Activated CD8-positive, alpha-beta T cell treated with anti-CD3 and anti-CD28 coated beads for 36 hours (primary cell): ENCODE measurements at regions of chr14 and their contacts with region 1.

Region 1: DNA sequence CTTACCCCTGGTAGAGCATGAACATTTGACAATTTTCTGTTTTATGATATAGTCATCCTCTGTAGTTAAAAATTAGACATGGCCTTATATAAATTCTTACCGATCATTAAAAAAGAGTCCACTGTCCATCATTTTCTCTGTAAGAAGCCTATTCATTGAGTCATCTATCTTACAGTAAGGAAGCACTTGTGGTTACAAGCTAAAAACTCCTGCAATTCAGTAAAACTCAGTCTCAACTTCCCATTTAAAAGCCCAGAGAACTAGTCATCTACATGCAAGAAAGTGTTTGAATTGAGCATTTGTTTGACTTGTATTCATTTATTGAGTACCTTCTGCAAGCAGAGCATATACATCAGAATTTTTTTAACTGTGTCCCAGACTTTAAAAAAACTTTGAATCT is 63.3 kb downstream of the GTF2A1 start:
- DNase-seq: no peak
- ATAC-seq: no peak
- H3K4me3 Mint-ChIP-seq: no peak overlapping the region
- H3K27ac Mint-ChIP-seq: no peak overlapping the region
- H3K4me1 Mint-ChIP-seq: peaks cover 13% of the 10 kb centered on the region
- H3K27me3 Mint-ChIP-seq: peaks cover 4% of the 10 kb centered on the region
- CTCF ChIP-seq: no peak

Region 2: GRCh38 chr14:80946797-80947196 is 210.6 kb before region 1 on chr14:
- CTCF ChIA-PET with region 1: no interaction called
- POLR2A ChIA-PET with region 1: no interaction called
- intact Hi-C with region 1: no loop called
- DNase-seq: no peak
- ATAC-seq: no peak
- H3K4me3 Mint-ChIP-seq: no peak overlapping the region
- H3K27ac Mint-ChIP-seq: no peak overlapping the region
- H3K4me1 Mint-ChIP-seq: peaks cover 27% of the 10 kb centered on the region
- H3K27me3 Mint-ChIP-seq: peaks cover 1% of the 10 kb centered on the region
- CTCF ChIP-seq: no peak

Region 3: DNA sequence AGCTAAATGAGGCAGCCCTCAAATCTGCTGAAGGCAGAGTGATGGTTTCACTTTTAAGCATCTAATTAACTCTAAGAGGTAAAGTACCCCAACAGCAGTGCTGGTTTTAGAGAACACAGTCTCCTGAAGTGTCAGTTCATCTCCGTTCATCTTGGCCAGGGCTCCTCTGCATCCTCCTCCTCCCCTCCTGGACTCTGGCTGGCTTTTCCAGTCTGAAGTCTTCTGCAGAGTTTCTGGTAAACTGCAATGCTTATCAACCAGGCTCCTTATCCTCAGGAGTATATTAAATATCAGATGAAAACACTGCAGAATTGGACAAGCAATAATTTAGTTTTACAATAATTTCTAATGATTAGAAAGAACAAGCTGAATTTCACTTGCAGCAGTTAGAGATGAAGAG is 52.1 kb before region 1 on chr14:
- CTCF ChIA-PET with region 1: no interaction called
- POLR2A ChIA-PET with region 1: no interaction called
- intact Hi-C with region 1: no loop called
- DNase-seq: no peak
- ATAC-seq: no peak
- H3K4me3 Mint-ChIP-seq: no peak overlapping the region
- H3K27ac Mint-ChIP-seq: no peak overlapping the region
- H3K4me1 Mint-ChIP-seq: no peaks in the 10 kb centered on the region
- H3K27me3 Mint-ChIP-seq: no peaks in the 10 kb centered on the region
- CTCF ChIP-seq: no peak

Region 4: GRCh38 chr14:81170104-81170828 is 12.8 kb after region 1 on chr14:
- CTCF ChIA-PET with region 1: interaction called, 15 read pairs
- POLR2A ChIA-PET with region 1: no interaction called
- intact Hi-C with region 1: no loop called
- DNase-seq: peak; percentile 93
- ATAC-seq: peak; percentile 97
- H3K4me3 Mint-ChIP-seq: peak overlapping the region; percentile 90
- H3K27ac Mint-ChIP-seq: peak overlapping the region; percentile 95
- H3K4me1 Mint-ChIP-seq: peaks cover 15% of the 10 kb centered on the region
- H3K27me3 Mint-ChIP-seq: no peaks in the 10 kb centered on the region
- CTCF ChIP-seq: peak; percentile 86